GM18951 (cell line): ENCODE measurements at regions of chrX and their contacts with region 1.

Region 1: GRCh38 chrX:3651276-3651675 is 62.2 kb downstream of the PRKX start:
- POLR2A ChIP-seq: no peak

Region 2: GRCh38 chrX:3811331-3812311 is 160.3 kb after region 1 on chrX:
- in situ Hi-C with region 1: loop called (anchors 5 kb)
- POLR2A ChIP-seq: no peak